CD4-positive, alpha-beta T cell (primary cell): ENCODE measurements at regions of chr9 and their contacts with region 1.

Region 1: DNA sequence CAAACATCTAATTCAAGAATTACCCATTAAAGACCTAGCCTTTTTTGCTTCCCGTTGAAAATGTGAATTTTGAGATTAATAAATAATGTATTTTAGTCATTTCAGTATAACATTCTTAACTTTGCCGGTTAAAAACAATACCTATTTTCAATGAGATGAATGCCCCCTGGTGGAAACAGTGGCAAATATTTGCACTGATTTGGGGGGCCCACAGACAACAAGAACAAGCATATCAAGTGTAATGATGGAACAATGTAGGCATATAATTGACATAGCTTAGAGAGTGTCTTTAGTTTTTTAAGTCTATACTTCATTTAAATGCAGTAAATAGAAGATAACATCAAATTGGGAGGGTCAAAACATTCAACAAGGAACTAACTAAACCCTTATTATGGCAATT is 111.9 kb downstream of the NTRK2 start:
- DNase-seq: peak in 3 of 14 experiments; percentile 9 to 26 (median 17)
- ATAC-seq: no peak
- H3K4me3 ChIP-seq: no peak overlapping the region
- H3K4me3 Mint-ChIP-seq: no peak overlapping the region
- H3K27ac ChIP-seq: no peak overlapping the region
- H3K27ac Mint-ChIP-seq: no peak overlapping the region
- H3K4me1 ChIP-seq: no peaks in the 10 kb centered on the region
- H3K4me1 Mint-ChIP-seq: no peaks in the 10 kb centered on the region
- H3K27me3 ChIP-seq: no peaks in the 10 kb centered on the region
- H3K27me3 Mint-ChIP-seq: peaks cover 11% of the 10 kb centered on the region
- CTCF ChIP-seq: no peak

Region 2: GRCh38 chr9:84296146-84296843 is 485.2 kb before region 1 on chr9:
- CTCF ChIA-PET with region 1: no interaction called
- POLR2A ChIA-PET with region 1: no interaction called
- intact Hi-C with region 1: no loop called
- DNase-seq: peak in 8 of 14 experiments; percentile 4 to 77 (median 27)
- ATAC-seq: peak; percentile 51
- H3K4me3 ChIP-seq: no peak overlapping the region
- H3K4me3 Mint-ChIP-seq: no peak overlapping the region
- H3K27ac ChIP-seq: peak overlapping the region in 1 of 2 donors; percentile 49
- H3K27ac Mint-ChIP-seq: peak overlapping the region; percentile 78
- H3K4me1 ChIP-seq: peaks cover 36% of the 10 kb centered on the region
- H3K4me1 Mint-ChIP-seq: peaks cover 53% of the 10 kb centered on the region
- H3K27me3 ChIP-seq: no peaks in the 10 kb centered on the region
- H3K27me3 Mint-ChIP-seq: no peaks in the 10 kb centered on the region
- CTCF ChIP-seq: no peak

Region 3: GRCh38 chr9:84697509-84698114 is 83.8 kb before region 1 on chr9:
- CTCF ChIA-PET with region 1: no interaction called
- POLR2A ChIA-PET with region 1: no interaction called
- intact Hi-C with region 1: loop called in 1 of 2 experiments (anchors 5 kb)
- DNase-seq: peak in 9 of 14 experiments; percentile 0 to 49 (median 27)
- ATAC-seq: no peak
- H3K4me3 ChIP-seq: no peak overlapping the region
- H3K4me3 Mint-ChIP-seq: no peak overlapping the region
- H3K27ac ChIP-seq: no peak overlapping the region
- H3K27ac Mint-ChIP-seq: no peak overlapping the region
- H3K4me1 ChIP-seq: no peaks in the 10 kb centered on the region
- H3K4me1 Mint-ChIP-seq: no peaks in the 10 kb centered on the region
- H3K27me3 ChIP-seq: no peaks in the 10 kb centered on the region
- H3K27me3 Mint-ChIP-seq: peaks cover 8% of the 10 kb centered on the region
- CTCF ChIP-seq: no peak

Region 4: GRCh38 chr9:84736081-84736480 is 45.4 kb before region 1 on chr9:
- CTCF ChIA-PET with region 1: no interaction called
- POLR2A ChIA-PET with region 1: no interaction called
- intact Hi-C with region 1: no loop called
- DNase-seq: no peak
- ATAC-seq: no peak
- H3K4me3 ChIP-seq: no peak overlapping the region
- H3K4me3 Mint-ChIP-seq: no peak overlapping the region
- H3K27ac ChIP-seq: no peak overlapping the region
- H3K27ac Mint-ChIP-seq: no peak overlapping the region
- H3K4me1 ChIP-seq: no peaks in the 10 kb centered on the region
- H3K4me1 Mint-ChIP-seq: no peaks in the 10 kb centered on the region
- H3K27me3 ChIP-seq: peaks cover 0 to 2% of the 10 kb centered on the region in 2 experiments
- H3K27me3 Mint-ChIP-seq: no peaks in the 10 kb centered on the region
- CTCF ChIP-seq: no peak

Region 5: DNA sequence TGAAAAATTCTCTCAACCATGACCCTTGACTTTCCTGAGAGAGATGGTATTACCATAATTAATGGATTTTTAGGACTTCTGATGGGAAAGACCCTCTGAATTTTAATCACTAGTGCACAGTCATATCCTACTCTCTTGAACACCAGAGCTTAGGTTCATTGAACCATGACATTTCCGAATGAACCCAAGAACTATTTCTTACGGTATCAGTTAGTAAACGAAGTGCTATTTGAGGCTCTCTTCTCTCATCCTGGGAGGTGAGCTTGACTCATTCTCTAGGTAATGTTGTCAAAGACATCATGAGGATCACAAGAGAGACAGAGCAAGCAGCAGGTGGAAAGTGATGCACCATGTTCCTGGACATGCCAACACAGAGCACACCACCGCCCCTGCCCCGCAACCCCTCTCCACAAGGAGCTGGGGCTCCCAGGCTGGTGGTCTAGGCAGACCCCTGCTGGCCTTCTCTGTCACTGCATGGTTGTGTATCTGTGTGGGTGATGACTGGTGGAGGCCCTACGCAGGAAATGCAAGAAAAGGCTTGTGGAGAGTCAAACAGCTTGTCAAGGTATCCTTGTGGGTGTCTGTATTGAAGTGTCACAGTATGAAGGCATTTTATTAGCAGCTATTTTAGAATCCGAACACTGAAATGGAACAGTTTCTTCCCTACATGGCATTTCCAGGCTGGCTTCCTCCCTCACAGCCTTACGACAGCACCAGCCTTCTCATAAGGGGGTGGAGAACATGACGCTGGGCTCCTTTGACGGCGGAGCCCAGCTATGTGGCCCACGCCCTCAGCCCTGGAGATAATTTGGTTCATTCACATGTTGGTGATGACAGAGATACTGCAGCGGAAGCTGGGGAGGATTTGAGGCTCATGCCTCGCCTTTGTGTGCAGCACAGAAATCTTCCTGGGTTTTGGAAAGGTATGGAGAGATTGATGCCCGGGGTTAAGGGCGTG is 185.7 kb after region 1 on chr9:
- CTCF ChIA-PET with region 1: no interaction called
- POLR2A ChIA-PET with region 1: no interaction called
- intact Hi-C with region 1: no loop called
- DNase-seq: no peak
- ATAC-seq: no peak
- H3K4me3 ChIP-seq: no peak overlapping the region
- H3K4me3 Mint-ChIP-seq: no peak overlapping the region
- H3K27ac ChIP-seq: no peak overlapping the region
- H3K27ac Mint-ChIP-seq: no peak overlapping the region
- H3K4me1 ChIP-seq: no peaks in the 10 kb centered on the region
- H3K4me1 Mint-ChIP-seq: no peaks in the 10 kb centered on the region
- H3K27me3 ChIP-seq: peaks cover 0 to 2% of the 10 kb centered on the region in 2 experiments
- H3K27me3 Mint-ChIP-seq: peaks cover 15% of the 10 kb centered on the region
- CTCF ChIP-seq: no peak